A673 (cell line): ENCODE measurements at regions of chr7 and their contacts with region 1.

Region 1: GRCh38 chr7:4107839-4108238 is 574.3 kb upstream of the FOXK1 start:
- DNase-seq: no peak
- H3K4me3 ChIP-seq: no peak overlapping the region
- H3K27ac ChIP-seq: no peak overlapping the region
- H3K4me1 ChIP-seq: no peaks in the 10 kb centered on the region
- H3K27me3 ChIP-seq: no peaks in the 10 kb centered on the region
- CTCF ChIP-seq: no peak

Region 2: DNA sequence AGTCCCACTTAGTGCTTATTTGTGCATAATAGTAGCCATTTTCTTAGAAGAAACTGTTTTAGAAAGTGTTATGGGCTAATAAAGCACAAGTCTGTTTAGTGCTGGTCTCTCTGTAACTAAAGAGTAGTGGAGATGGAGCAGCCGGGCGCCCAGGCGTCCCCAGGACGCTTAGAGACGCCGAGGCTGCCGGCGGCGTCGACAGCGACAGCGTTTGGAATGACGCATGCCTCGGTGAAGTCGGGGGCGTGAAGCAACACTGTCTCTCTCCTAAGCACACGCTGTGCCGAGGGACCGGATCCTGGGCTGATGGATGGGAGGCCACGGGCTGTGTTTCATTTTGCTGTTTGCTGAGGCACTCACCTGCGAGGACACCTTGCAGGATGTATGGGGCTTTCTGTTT is 14.4 kb before region 1 on chr7:
- CTCF ChIA-PET with region 1: interaction called, 12 read pairs
- POLR2A ChIA-PET with region 1: no interaction called
- intact Hi-C with region 1: no loop called
- DNase-seq: no peak
- H3K4me3 ChIP-seq: no peak overlapping the region
- H3K27ac ChIP-seq: no peak overlapping the region
- H3K4me1 ChIP-seq: no peaks in the 10 kb centered on the region
- H3K27me3 ChIP-seq: no peaks in the 10 kb centered on the region
- CTCF ChIP-seq: no peak

Region 3: DNA sequence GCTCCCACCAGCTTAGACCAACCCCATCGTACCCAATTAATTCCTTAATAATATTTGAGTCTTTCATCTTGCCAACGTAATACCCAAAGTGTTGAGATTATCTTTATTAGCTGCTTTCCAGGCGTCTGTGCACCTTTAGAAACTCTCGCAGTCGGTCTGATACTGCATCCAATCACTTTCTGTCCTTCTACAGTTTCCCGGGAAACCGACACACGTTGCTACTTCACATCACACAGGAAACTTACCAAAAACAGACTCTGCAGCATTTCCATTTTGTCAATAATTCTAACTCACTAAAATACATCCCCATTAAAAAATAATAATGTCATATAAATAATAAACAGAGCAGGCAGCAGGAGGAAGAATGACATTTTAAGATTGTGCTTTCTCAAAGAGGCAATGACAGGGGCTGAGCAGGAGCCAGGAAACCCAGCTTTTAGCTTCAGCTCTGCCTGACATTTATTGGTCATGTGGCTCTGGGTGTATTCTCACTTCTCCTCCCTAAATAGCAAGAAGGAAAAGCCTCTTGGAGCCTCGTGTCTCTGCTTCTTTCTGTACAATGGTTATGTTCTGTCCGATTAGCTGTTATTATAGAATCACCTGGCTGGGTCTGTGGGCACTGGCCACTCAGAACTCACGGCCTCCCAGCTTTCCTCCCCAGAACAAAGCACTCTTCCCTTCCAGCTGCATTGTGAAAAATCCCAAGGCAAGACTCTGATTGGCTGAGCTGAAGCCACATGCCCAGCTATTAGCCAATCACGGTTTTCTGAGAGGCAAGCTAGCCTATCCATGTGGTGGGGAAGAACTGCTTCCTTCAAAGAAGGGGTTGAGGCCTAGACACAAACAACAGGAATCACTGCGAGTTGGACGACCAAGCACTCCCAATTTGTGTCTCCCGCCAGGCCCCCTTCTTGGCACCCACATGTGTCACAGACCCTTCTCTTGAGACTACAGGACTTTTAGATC is 149.6 kb after region 1 on chr7:
- CTCF ChIA-PET with region 1: no interaction called
- POLR2A ChIA-PET with region 1: no interaction called
- intact Hi-C with region 1: no loop called
- DNase-seq: no peak
- H3K4me3 ChIP-seq: no peak overlapping the region
- H3K27ac ChIP-seq: no peak overlapping the region
- H3K4me1 ChIP-seq: no peaks in the 10 kb centered on the region
- H3K27me3 ChIP-seq: no peaks in the 10 kb centered on the region
- CTCF ChIP-seq: no peak